CD4-positive, alpha-beta T cell (primary cell): ENCODE measurements at regions of chr6 and their contacts with region 1.

Region 1: DNA sequence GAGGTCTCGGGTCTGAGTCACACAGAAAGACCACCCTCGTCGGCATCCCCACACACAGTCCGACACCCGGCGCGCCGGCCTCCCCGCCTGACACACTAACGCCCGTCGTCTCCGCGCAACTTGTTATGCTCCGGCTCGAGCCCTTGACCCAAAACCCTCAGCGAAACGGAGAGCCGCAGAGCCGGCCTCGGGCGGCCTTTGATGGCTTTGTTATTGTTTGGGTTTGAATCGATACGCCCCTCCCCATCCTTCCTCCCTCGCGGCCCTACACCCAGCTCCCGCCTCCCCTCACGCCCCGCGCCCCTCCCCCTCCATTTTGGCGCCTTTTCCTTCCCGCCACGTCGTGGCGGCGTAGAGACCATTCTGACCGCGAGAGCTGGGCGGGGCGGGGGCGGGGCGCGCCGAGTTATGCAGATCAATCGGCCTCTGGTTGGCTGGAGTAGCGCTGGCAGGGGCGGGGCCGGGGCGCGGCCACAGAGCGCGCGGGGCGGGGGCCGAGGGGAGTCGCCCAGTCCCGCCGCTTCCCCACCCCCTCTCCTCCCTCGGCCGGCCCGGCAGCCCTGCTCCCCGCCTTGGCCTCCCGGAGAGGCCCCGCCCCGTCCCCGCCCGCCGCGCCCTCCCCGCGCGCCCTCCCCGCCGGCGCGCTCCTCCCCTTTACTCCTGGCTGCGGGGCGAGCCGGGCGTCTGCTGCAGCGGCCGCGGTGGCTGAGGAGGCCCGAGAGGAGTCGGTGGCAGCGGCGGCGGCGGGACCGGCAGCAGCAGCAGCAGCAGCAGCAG is at the start of gene PIM1:
- DNase-seq: peak; percentile 98 to 100 (median 100)
- ATAC-seq: peak; percentile 77
- H3K4me3 ChIP-seq: peak within 1 kb of the TSS; percentile 93
- H3K4me3 Mint-ChIP-seq: peak within 1 kb of the TSS; percentile 95
- H3K27ac ChIP-seq: peak within 1 kb of the TSS; percentile 57 to 77
- H3K27ac Mint-ChIP-seq: peak within 1 kb of the TSS; percentile 95
- H3K4me1 ChIP-seq: peaks cover 36% of the 10 kb centered on the region
- H3K4me1 Mint-ChIP-seq: peaks cover 44% of the 10 kb centered on the region
- H3K27me3 ChIP-seq: no peaks in the 10 kb centered on the region
- H3K27me3 Mint-ChIP-seq: no peaks in the 10 kb centered on the region
- CTCF ChIP-seq: no peak
- total RNA-seq, gene PIM1: 175 to 183 TPM

Region 2: GRCh38 chr6:37029249-37029971 is 140.3 kb before region 1 on chr6:
- CTCF ChIA-PET with region 1: interaction called, 32 read pairs
- POLR2A ChIA-PET with region 1: interaction called, 164 read pairs
- intact Hi-C with region 1: no loop called
- DNase-seq: peak in 5 of 14 experiments; percentile 31 to 80 (median 60)
- ATAC-seq: peak; percentile 57
- H3K4me3 ChIP-seq: no peak overlapping the region
- H3K4me3 Mint-ChIP-seq: no peak overlapping the region
- H3K27ac ChIP-seq: no peak overlapping the region
- H3K27ac Mint-ChIP-seq: no peak overlapping the region
- H3K4me1 ChIP-seq: peaks cover 16% of the 10 kb centered on the region
- H3K4me1 Mint-ChIP-seq: peaks cover 5% of the 10 kb centered on the region
- H3K27me3 ChIP-seq: no peaks in the 10 kb centered on the region
- H3K27me3 Mint-ChIP-seq: no peaks in the 10 kb centered on the region
- CTCF ChIP-seq: peak; percentile 60

Region 3: GRCh38 chr6:37102279-37103168 is 67.2 kb before region 1 on chr6:
- CTCF ChIA-PET with region 1: interaction called, 5 read pairs
- POLR2A ChIA-PET with region 1: interaction called, 10 read pairs
- intact Hi-C with region 1: loop called (anchors 2 to 5 kb)
- DNase-seq: peak; percentile 49 to 92 (median 68)
- ATAC-seq: peak; percentile 93
- H3K4me3 ChIP-seq: peak overlapping the region; percentile 51
- H3K4me3 Mint-ChIP-seq: peak overlapping the region; percentile 72
- H3K27ac ChIP-seq: peak overlapping the region in 1 of 2 donors; percentile 62
- H3K27ac Mint-ChIP-seq: peak overlapping the region; percentile 81
- H3K4me1 ChIP-seq: peaks cover 23% of the 10 kb centered on the region
- H3K4me1 Mint-ChIP-seq: peaks cover 39% of the 10 kb centered on the region
- H3K27me3 ChIP-seq: no peaks in the 10 kb centered on the region
- H3K27me3 Mint-ChIP-seq: no peaks in the 10 kb centered on the region
- CTCF ChIP-seq: no peak

Region 4: GRCh38 chr6:37190159-37190535 is 20.5 kb after region 1 on chr6:
- CTCF ChIA-PET with region 1: interaction called, 4 read pairs
- POLR2A ChIA-PET with region 1: interaction called, 25 read pairs
- intact Hi-C with region 1: no loop called
- DNase-seq: no peak
- ATAC-seq: no peak
- H3K4me3 ChIP-seq: no peak overlapping the region
- H3K4me3 Mint-ChIP-seq: no peak overlapping the region
- H3K27ac ChIP-seq: no peak overlapping the region
- H3K27ac Mint-ChIP-seq: no peak overlapping the region
- H3K4me1 ChIP-seq: peaks cover 49% of the 10 kb centered on the region
- H3K4me1 Mint-ChIP-seq: peaks cover 59% of the 10 kb centered on the region
- H3K27me3 ChIP-seq: no peaks in the 10 kb centered on the region
- H3K27me3 Mint-ChIP-seq: no peaks in the 10 kb centered on the region
- CTCF ChIP-seq: no peak

Region 5: GRCh38 chr6:37554480-37554819 is 384.8 kb after region 1 on chr6:
- CTCF ChIA-PET with region 1: no interaction called
- POLR2A ChIA-PET with region 1: no interaction called
- intact Hi-C with region 1: no loop called
- DNase-seq: no peak
- ATAC-seq: no peak
- H3K4me3 ChIP-seq: no peak overlapping the region
- H3K4me3 Mint-ChIP-seq: no peak overlapping the region
- H3K27ac ChIP-seq: no peak overlapping the region
- H3K27ac Mint-ChIP-seq: no peak overlapping the region
- H3K4me1 ChIP-seq: peaks cover 23% of the 10 kb centered on the region
- H3K4me1 Mint-ChIP-seq: peaks cover 30% of the 10 kb centered on the region
- H3K27me3 ChIP-seq: no peaks in the 10 kb centered on the region
- H3K27me3 Mint-ChIP-seq: no peaks in the 10 kb centered on the region
- CTCF ChIP-seq: no peak